Activated CD8-positive, alpha-beta T cell treated with anti-CD3 and anti-CD28 coated beads for 36 hours (primary cell): ENCODE measurements at regions of chr22 and their contacts with region 1.

Region 1: GRCh38 chr22:50030297-50031188 is 18.0 kb upstream of the IL17REL start:
- DNase-seq: peak; percentile 91
- ATAC-seq: peak; percentile 95
- H3K4me3 Mint-ChIP-seq: no peak overlapping the region
- H3K27ac Mint-ChIP-seq: no peak overlapping the region
- H3K4me1 Mint-ChIP-seq: peaks cover 17% of the 10 kb centered on the region
- H3K27me3 Mint-ChIP-seq: no peaks in the 10 kb centered on the region
- CTCF ChIP-seq: peak; percentile 95

Region 2: GRCh38 chr22:49925525-49926128 is 104.9 kb before region 1 on chr22:
- CTCF ChIA-PET with region 1: interaction called, 43 read pairs
- POLR2A ChIA-PET with region 1: interaction called, 3 read pairs
- intact Hi-C with region 1: no loop called
- DNase-seq: peak; percentile 87
- ATAC-seq: peak; percentile 84
- H3K4me3 Mint-ChIP-seq: peak overlapping the region; percentile 77
- H3K27ac Mint-ChIP-seq: peak overlapping the region; percentile 94
- H3K4me1 Mint-ChIP-seq: peaks cover 33% of the 10 kb centered on the region
- H3K27me3 Mint-ChIP-seq: no peaks in the 10 kb centered on the region
- CTCF ChIP-seq: no peak

Region 3: GRCh38 chr22:49936018-49936952 is 94.3 kb before region 1 on chr22:
- CTCF ChIA-PET with region 1: interaction called, 43 read pairs
- POLR2A ChIA-PET with region 1: interaction called, 3 read pairs
- intact Hi-C with region 1: loop called (anchors 1 kb)
- DNase-seq: peak; percentile 100
- ATAC-seq: peak; percentile 87
- H3K4me3 Mint-ChIP-seq: peak overlapping the region; percentile 63
- H3K27ac Mint-ChIP-seq: peak overlapping the region; percentile 90
- H3K4me1 Mint-ChIP-seq: peaks cover 24% of the 10 kb centered on the region
- H3K27me3 Mint-ChIP-seq: no peaks in the 10 kb centered on the region
- CTCF ChIP-seq: no peak

Region 4: GRCh38 chr22:49992921-49993648 is 37.5 kb before region 1 on chr22:
- CTCF ChIA-PET with region 1: interaction called, 63 read pairs
- POLR2A ChIA-PET with region 1: interaction called, 3 read pairs
- intact Hi-C with region 1: loop called (anchors 5 kb)
- DNase-seq: peak; percentile 84
- ATAC-seq: peak; percentile 97
- H3K4me3 Mint-ChIP-seq: no peak overlapping the region
- H3K27ac Mint-ChIP-seq: no peak overlapping the region
- H3K4me1 Mint-ChIP-seq: peaks cover 8% of the 10 kb centered on the region
- H3K27me3 Mint-ChIP-seq: peaks cover 3% of the 10 kb centered on the region
- CTCF ChIP-seq: peak; percentile 84

Region 5: DNA sequence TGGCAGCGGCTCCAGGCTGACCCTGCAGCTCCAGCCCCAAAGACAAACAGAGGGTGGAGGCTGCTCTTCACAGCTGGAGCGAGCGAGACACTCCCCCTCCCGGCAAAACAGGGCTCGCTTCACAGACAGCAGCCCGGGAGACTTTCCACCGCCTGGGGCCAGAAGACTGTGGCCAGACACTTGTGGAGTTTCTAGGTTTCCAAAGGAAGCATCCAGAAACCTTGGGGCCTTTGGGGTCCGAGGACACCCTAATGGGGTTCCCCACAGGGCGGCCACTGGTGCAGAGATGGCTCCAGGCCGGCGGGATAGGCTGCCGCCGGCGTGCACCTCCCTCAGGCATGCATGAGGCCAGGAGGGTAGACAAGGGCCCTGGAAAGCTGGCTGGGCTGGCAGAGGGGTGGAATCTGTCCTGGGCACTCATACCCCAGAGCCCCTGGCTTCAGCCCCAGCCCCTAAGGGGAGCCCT is 17.8 kb before region 1 on chr22 and contains the start of gene IL17REL:
- CTCF ChIA-PET with region 1: interaction called, 27 read pairs
- POLR2A ChIA-PET with region 1: interaction called, 7 read pairs
- intact Hi-C with region 1: no loop called
- DNase-seq: no peak
- ATAC-seq: no peak
- H3K4me3 Mint-ChIP-seq: peak within 1 kb of the TSS; percentile 62
- H3K27ac Mint-ChIP-seq: peak within 1 kb of the TSS; percentile 72
- H3K4me1 Mint-ChIP-seq: peaks cover 31% of the 10 kb centered on the region
- H3K27me3 Mint-ChIP-seq: peaks cover 2% of the 10 kb centered on the region
- CTCF ChIP-seq: no peak
- total RNA-seq, gene IL17REL: 0.14 TPM in 1 of 2 experiments, not detected in the other

Region 6: GRCh38 chr22:50049299-50050081 is 18.9 kb after region 1 on chr22:
- CTCF ChIA-PET with region 1: no interaction called
- POLR2A ChIA-PET with region 1: no interaction called
- intact Hi-C with region 1: no loop called
- DNase-seq: no peak
- ATAC-seq: no peak
- H3K4me3 Mint-ChIP-seq: no peak overlapping the region
- H3K27ac Mint-ChIP-seq: no peak overlapping the region
- H3K4me1 Mint-ChIP-seq: peaks cover 5% of the 10 kb centered on the region
- H3K27me3 Mint-ChIP-seq: peaks cover 8% of the 10 kb centered on the region
- CTCF ChIP-seq: no peak